PC-3 (cell line): ENCODE measurements at regions of chr4 and their contacts with region 1.

Region 1: GRCh38 chr4:1871471-1872021 is 353 bp downstream of the NSD2 start:
- DNase-seq: no peak
- ATAC-seq: peak; percentile 4
- H3K4me3 ChIP-seq: peak overlapping the region; percentile 92
- H3K27ac ChIP-seq: peak overlapping the region; percentile 51
- H3K4me1 ChIP-seq: peaks cover 25% of the 10 kb centered on the region
- H3K27me3 ChIP-seq: no peaks in the 10 kb centered on the region
- CTCF ChIP-seq: no peak

Region 2: DNA sequence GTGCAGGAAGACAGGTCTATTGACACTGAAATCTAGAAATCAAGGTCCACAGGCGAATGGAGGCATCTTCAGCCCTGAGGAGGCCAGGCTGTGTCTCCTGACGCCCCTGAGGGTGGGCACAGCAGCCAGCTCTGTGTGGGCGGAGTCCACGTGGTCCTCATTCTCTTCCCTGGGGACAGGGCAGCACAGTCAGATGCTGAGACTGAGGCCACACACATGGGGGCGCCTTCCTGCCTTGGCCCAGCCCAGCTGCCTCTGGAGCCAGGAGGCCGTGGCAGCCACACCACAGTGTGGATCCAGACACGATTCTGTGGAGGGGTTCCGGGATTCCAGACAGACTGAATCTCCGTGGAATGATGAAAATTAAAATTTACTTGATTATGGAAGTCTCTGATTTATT is 57.6 kb before region 1 on chr4:
- CTCF ChIA-PET with region 1: no interaction called
- POLR2A ChIA-PET with region 1: no interaction called
- intact Hi-C with region 1: no loop called
- DNase-seq: no peak
- ATAC-seq: no peak
- H3K4me3 ChIP-seq: no peak overlapping the region
- H3K27ac ChIP-seq: no peak overlapping the region
- H3K4me1 ChIP-seq: no peaks in the 10 kb centered on the region
- H3K27me3 ChIP-seq: no peaks in the 10 kb centered on the region
- CTCF ChIP-seq: peak; percentile 22; the same call in 1 of the 2 replicates

Region 3: DNA sequence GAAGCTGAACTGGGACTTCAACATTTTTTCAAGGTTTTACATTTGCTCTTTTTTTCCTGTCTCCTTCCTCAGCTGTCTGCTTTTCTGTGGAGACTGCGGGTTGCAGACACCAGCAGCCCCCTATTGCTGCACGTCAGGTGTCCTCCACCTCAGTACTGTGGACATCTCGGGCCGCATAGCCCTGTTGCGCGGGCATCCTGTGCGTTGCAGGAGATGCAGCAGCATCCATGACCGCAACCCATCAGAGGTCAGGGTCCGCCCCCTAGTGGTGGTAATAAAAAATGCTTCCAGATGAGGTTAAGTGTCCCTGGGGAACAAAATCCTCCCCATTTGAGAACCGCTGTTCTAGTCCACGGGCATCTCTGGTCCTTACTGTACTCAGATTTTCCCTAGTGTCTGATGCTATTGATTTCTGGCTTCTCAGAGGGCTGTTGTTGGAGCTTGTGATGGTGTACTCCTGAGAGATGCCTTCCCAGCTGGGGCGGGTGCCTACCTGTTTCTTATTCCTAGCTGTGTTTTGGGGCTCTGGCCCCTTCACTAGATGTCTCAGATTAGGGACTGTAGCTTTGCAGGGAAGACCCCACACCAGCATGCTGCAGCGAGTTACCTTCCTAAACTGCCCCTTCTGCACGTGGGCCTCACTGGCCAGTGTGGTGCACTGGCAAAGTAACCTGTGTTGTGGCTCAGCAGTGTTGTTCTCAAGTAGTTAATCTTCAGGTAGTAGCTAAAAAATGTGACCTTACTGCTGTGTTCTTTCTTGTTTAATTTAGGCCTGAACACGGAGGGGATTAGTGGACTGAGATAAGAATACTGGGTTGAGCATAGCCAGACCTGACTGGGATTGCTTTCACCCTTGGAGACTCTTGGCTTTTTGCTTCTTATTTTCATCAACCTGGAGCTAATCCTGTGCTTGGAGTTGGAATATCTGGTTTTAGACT is 27.9 kb after region 1 on chr4:
- CTCF ChIA-PET with region 1: no interaction called
- POLR2A ChIA-PET with region 1: no interaction called
- intact Hi-C with region 1: loop called (anchors 2 kb)
- DNase-seq: peak; percentile 59
- ATAC-seq: peak; percentile 82
- H3K4me3 ChIP-seq: no peak overlapping the region
- H3K27ac ChIP-seq: no peak overlapping the region
- H3K4me1 ChIP-seq: no peaks in the 10 kb centered on the region
- H3K27me3 ChIP-seq: no peaks in the 10 kb centered on the region
- CTCF ChIP-seq: peak; percentile 79

Region 4: DNA sequence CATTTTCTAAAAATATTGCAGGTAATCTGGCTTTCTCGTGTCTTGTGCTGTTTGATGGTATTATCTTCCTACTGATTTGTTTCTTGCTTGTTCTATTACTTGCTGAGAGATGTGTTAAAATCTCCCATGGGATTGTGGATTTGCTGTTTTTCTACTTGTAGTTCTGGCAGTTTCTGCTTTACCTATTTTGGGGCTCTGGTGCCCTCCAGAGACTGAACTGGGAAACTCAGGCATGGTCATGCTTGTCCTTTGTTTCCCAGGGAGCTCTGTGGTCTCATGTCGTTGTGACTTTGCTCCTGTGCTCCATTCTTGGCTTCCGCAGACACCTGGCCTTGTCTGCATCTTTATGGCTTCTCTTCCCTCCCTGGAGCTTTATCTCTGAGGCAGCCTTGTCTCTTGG is 39.1 kb after region 1 on chr4:
- CTCF ChIA-PET with region 1: interaction called, 13 read pairs
- POLR2A ChIA-PET with region 1: no interaction called
- intact Hi-C with region 1: no loop called
- DNase-seq: peak; percentile 40
- ATAC-seq: peak; percentile 59
- H3K4me3 ChIP-seq: no peak overlapping the region
- H3K27ac ChIP-seq: no peak overlapping the region
- H3K4me1 ChIP-seq: no peaks in the 10 kb centered on the region
- H3K27me3 ChIP-seq: no peaks in the 10 kb centered on the region
- CTCF ChIP-seq: peak; percentile 64

Region 5: DNA sequence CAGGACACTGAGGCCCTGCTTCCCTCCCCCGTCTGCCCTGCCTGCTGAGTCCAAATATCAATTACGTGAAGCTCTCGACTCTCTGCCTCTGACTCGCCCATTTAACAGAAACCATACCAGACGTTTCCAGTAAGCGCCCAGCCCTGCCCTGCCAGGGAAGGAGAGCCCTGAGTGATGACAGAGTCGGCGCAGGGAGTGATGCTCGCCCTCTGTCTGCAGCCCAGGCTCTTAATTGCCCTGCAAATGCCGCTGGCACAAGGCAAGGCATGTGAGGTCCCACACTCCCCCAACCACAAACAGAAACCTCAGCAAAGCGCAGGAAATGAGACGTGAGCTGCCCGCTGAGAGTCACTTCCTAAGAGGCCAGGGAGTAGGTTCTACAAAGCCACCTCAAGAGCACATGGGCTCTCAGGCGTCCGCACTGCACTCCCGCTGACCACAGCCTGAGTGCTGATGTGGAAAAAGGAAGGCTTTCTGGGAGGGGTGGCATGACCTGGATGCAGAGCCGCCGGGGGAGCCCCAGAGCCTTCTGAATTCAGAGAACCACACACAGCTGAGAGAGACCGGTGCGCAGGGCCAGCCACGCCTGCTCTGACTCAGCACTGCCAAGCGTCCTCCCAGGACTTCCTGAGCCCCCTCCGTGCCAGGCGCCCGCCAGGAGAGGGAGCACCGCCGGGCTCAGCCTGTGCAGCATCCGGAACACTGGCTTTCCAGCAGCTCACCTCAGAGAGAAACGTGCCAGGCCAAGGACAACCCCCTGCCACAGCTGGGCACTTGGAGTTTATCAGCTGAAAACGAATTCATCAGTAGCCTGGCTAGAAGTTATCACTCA is 541.6 kb after region 1 on chr4:
- CTCF ChIA-PET with region 1: no interaction called
- POLR2A ChIA-PET with region 1: interaction called, 10 read pairs
- intact Hi-C with region 1: no loop called
- DNase-seq: peak; percentile 88
- ATAC-seq: peak; percentile 88
- H3K4me3 ChIP-seq: peak overlapping the region; percentile 64
- H3K27ac ChIP-seq: peak overlapping the region; percentile 88
- H3K4me1 ChIP-seq: peaks cover 34% of the 10 kb centered on the region
- H3K27me3 ChIP-seq: no peaks in the 10 kb centered on the region; the same call in 1 of the 2 replicates
- CTCF ChIP-seq: peak; percentile 50